PC-3 (cell line): ENCODE measurements at regions of chr4 and their contacts with region 1.

Region 1: DNA sequence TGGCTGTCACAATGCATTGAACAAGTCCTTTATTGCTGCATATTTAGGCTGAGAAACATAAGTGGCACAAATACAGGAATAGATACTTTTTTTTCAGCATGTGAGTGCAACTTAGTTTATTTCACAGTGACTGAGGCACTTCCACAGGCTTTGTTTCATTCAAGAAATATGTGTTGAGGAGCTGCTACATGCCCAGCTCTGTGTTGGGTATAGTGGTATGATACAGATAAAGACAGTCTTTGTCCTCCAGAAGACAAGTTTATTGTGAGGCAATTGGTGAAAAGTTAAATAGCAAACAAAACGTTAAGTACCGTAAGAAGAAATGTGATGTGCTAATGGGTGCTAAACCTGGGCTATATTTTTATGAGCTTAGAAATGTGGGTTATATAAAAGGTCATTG is 186.4 kb downstream of the SPRY1 start:
- DNase-seq: no peak
- ATAC-seq: no peak
- H3K4me3 ChIP-seq: no peak overlapping the region
- H3K27ac ChIP-seq: no peak overlapping the region
- H3K4me1 ChIP-seq: peaks cover 9% of the 10 kb centered on the region
- H3K27me3 ChIP-seq: no peaks in the 10 kb centered on the region
- CTCF ChIP-seq: no peak

Region 2: GRCh38 chr4:123380728-123381716 is 202.0 kb before region 1 on chr4:
- CTCF ChIA-PET with region 1: no interaction called
- POLR2A ChIA-PET with region 1: no interaction called
- intact Hi-C with region 1: no loop called
- DNase-seq: no peak
- ATAC-seq: no peak
- H3K4me3 ChIP-seq: no peak overlapping the region
- H3K27ac ChIP-seq: no peak overlapping the region
- H3K4me1 ChIP-seq: peaks cover under 1% of the 10 kb centered on the region; the same call in 1 of the 2 replicates
- H3K27me3 ChIP-seq: no peaks in the 10 kb centered on the region
- CTCF ChIP-seq: no peak

Region 3: DNA sequence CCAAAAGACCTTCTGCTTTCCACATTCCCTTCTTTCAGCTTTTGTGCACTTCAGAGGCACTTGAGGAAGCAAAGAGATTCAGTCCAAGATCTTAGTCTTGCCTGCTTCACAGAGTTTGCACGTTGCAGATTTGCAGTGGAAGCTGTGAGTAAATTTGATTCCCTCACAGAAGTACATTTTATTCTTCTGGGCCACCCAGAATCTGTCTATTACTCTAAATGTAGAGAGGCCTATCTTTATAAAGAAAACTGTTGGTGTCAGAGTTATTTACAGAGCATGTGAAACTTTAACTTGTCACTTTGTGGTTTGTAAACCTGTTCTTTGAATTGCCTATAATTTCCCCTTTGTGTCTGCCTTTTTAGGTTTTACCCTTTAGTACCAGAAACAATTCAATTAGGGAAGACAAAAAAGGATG is 170.9 kb before region 1 on chr4:
- CTCF ChIA-PET with region 1: no interaction called
- POLR2A ChIA-PET with region 1: interaction called, 11 read pairs
- intact Hi-C with region 1: no loop called
- DNase-seq: peak; percentile 21
- ATAC-seq: no peak
- H3K4me3 ChIP-seq: no peak overlapping the region
- H3K27ac ChIP-seq: peak overlapping the region; percentile 59
- H3K4me1 ChIP-seq: peaks cover 45% of the 10 kb centered on the region
- H3K27me3 ChIP-seq: no peaks in the 10 kb centered on the region
- CTCF ChIP-seq: no peak

Region 4: GRCh38 chr4:123741906-123742305 is 158.9 kb after region 1 on chr4:
- CTCF ChIA-PET with region 1: no interaction called
- POLR2A ChIA-PET with region 1: no interaction called
- intact Hi-C with region 1: no loop called
- DNase-seq: no peak
- ATAC-seq: no peak
- H3K4me3 ChIP-seq: no peak overlapping the region
- H3K27ac ChIP-seq: no peak overlapping the region
- H3K4me1 ChIP-seq: no peaks in the 10 kb centered on the region
- H3K27me3 ChIP-seq: no peaks in the 10 kb centered on the region
- CTCF ChIP-seq: no peak

Region 5: GRCh38 chr4:123856689-123857545 is 273.9 kb after region 1 on chr4:
- CTCF ChIA-PET with region 1: no interaction called
- POLR2A ChIA-PET with region 1: interaction called, 14 read pairs
- intact Hi-C with region 1: no loop called
- DNase-seq: peak; percentile 33
- ATAC-seq: peak; percentile 75
- H3K4me3 ChIP-seq: peak overlapping the region; percentile 52; the same call in 1 of the 2 replicates
- H3K27ac ChIP-seq: no peak overlapping the region
- H3K4me1 ChIP-seq: peaks cover 10% of the 10 kb centered on the region; the same call in 1 of the 2 replicates
- H3K27me3 ChIP-seq: no peaks in the 10 kb centered on the region
- CTCF ChIP-seq: no peak

Region 6: GRCh38 chr4:125097729-125098128 is 1514.7 kb after region 1 on chr4:
- CTCF ChIA-PET with region 1: no interaction called
- POLR2A ChIA-PET with region 1: no interaction called
- intact Hi-C with region 1: no loop called
- DNase-seq: no peak
- ATAC-seq: no peak
- H3K4me3 ChIP-seq: no peak overlapping the region
- H3K27ac ChIP-seq: no peak overlapping the region
- H3K4me1 ChIP-seq: no peaks in the 10 kb centered on the region; the same call in 1 of the 2 replicates
- H3K27me3 ChIP-seq: no peaks in the 10 kb centered on the region
- CTCF ChIP-seq: no peak